ENCODE measurements at regions of chr20 and their contacts with region 1.

Region 1: DNA sequence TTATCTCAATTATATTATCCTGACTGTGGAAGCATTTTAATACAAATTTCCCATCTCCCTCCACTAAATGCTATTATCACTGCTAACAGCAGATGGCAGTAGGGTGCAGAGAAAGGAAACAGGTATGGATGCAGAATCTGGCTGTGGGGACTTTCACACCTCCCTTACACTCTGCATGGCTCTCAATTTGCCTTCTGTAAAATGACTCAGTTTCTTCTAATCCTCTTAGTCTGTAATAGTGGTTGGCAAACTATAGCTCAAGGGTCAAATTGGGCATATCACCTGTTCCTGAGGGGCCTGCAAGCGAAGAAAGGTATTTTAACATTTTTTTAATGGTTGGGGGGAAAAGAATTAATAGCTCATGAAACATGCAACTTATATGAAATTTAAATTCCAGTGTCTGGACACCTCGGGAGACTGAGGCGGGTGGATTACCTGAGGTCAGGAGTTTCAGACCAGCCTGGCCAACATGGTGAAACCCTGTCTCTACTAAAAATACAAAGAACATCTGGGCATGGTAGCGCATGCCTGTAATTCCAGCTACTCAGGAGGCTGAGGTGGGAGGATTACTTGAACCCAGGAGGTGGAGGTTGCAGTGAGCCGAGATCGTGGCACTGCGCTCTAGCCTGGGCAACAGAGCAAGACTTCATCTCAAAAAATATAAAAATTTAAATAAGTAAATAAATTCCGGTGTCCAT is 83.5 kb downstream of the ZMYND8 start:
- DNase-seq: peak; percentile 70
- H3K4me3 Mint-ChIP-seq: peak overlapping the region; percentile 43
- H3K27ac Mint-ChIP-seq: peak overlapping the region; percentile 96
- H3K4me1 Mint-ChIP-seq: peaks cover 44% of the 10 kb centered on the region
- H3K27me3 Mint-ChIP-seq: no peaks in the 10 kb centered on the region

Region 2: GRCh38 chr20:47113362-47114109 is 159.5 kb before region 1 on chr20:
- CTCF ChIA-PET with region 1: no interaction called
- intact Hi-C with region 1: no loop called
- DNase-seq: no peak
- H3K4me3 Mint-ChIP-seq: no peak overlapping the region
- H3K27ac Mint-ChIP-seq: no peak overlapping the region
- H3K4me1 Mint-ChIP-seq: no peaks in the 10 kb centered on the region
- H3K27me3 Mint-ChIP-seq: peaks cover 7% of the 10 kb centered on the region

Region 3: DNA sequence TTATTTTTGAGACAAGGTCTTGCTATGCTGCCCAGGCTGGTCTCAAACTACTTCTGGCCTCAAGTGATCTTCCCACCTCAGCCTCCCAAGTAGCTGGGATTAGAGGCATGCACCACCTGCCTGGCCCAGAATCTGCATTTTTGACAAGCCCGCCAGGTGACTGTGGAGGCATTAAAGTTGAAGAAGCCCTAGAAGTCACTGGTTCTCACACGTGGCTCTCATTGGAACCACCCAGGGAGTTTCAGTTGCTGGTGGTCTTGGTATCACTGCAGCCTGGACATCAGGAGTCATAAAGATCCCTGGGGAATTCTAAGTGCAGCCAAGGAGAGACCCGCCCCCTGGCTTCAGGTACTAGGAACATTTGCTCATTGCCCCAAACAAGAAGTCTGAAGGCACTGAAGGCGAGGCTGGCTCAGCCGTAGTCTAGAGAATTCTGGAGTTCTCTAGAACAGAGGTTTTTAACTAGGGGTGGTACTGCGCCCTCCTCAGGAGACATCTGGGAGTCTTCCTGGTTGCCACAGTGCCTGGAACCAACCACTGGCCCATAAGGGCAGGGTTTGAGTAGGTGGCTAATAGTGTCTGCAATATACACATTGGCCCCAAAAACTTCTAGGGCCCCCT is 99.3 kb before region 1 on chr20:
- CTCF ChIA-PET with region 1: no interaction called
- intact Hi-C with region 1: no loop called
- DNase-seq: no peak
- H3K4me3 Mint-ChIP-seq: no peak overlapping the region
- H3K27ac Mint-ChIP-seq: no peak overlapping the region
- H3K4me1 Mint-ChIP-seq: no peaks in the 10 kb centered on the region
- H3K27me3 Mint-ChIP-seq: no peaks in the 10 kb centered on the region

Region 4: GRCh38 chr20:47286681-47287080 is 13.6 kb after region 1 on chr20:
- CTCF ChIA-PET with region 1: interaction called, 10 read pairs
- intact Hi-C with region 1: no loop called
- DNase-seq: no peak
- H3K4me3 Mint-ChIP-seq: no peak overlapping the region
- H3K27ac Mint-ChIP-seq: no peak overlapping the region
- H3K4me1 Mint-ChIP-seq: no peaks in the 10 kb centered on the region
- H3K27me3 Mint-ChIP-seq: no peaks in the 10 kb centered on the region

Region 5: GRCh38 chr20:47317127-47317895 is 44.3 kb after region 1 on chr20:
- CTCF ChIA-PET with region 1: interaction called, 15 read pairs
- intact Hi-C with region 1: loop called (anchors 1 kb)
- DNase-seq: peak; percentile 79
- H3K4me3 Mint-ChIP-seq: peak overlapping the region; percentile 22
- H3K27ac Mint-ChIP-seq: peak overlapping the region; percentile 88
- H3K4me1 Mint-ChIP-seq: peaks cover 74% of the 10 kb centered on the region
- H3K27me3 Mint-ChIP-seq: no peaks in the 10 kb centered on the region

Region 6: GRCh38 chr20:47370850-47371676 is 98.0 kb after region 1 on chr20:
- CTCF ChIA-PET with region 1: interaction called, 25 read pairs
- intact Hi-C with region 1: no loop called
- DNase-seq: no peak
- H3K4me3 Mint-ChIP-seq: no peak overlapping the region
- H3K27ac Mint-ChIP-seq: no peak overlapping the region
- H3K4me1 Mint-ChIP-seq: no peaks in the 10 kb centered on the region
- H3K27me3 Mint-ChIP-seq: no peaks in the 10 kb centered on the region

Region 7: GRCh38 chr20:47487175-47487917 is 214.3 kb after region 1 on chr20:
- CTCF ChIA-PET with region 1: no interaction called
- intact Hi-C with region 1: loop called (anchors 1 kb)
- DNase-seq: peak; percentile 72
- H3K4me3 Mint-ChIP-seq: peak overlapping the region; percentile 58
- H3K27ac Mint-ChIP-seq: peak overlapping the region; percentile 98
- H3K4me1 Mint-ChIP-seq: peaks cover 53% of the 10 kb centered on the region
- H3K27me3 Mint-ChIP-seq: no peaks in the 10 kb centered on the region